ENCODE measurements at regions of chr9 and their contacts with region 1.

Region 1: DNA sequence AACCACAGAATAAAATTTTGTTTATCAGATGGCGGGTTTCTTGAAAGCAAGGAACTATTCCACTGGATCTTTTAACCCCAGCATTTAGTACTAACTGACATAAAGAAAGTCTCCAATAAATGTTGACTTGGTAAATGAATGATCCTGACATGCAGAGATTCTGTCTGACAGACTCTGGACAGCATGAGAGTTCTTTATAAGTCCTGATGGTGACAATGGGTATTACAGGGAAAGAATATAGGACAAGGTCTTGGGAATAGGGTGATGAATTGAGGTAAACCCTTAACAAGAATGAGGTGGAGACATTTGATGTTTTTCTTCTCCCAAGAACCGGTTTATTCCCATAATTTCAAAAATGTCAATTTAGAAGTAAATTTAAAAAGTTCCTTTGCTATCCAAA is 453.9 kb downstream of the TUSC1 start:
- DNase-seq: no peak
- ATAC-seq: no peak
- H3K4me3 Mint-ChIP-seq: no peak overlapping the region
- H3K27ac Mint-ChIP-seq: no peak overlapping the region
- H3K4me1 Mint-ChIP-seq: no peaks in the 10 kb centered on the region
- H3K27me3 Mint-ChIP-seq: no peaks in the 10 kb centered on the region
- CTCF ChIP-seq: no peak

Region 2: DNA sequence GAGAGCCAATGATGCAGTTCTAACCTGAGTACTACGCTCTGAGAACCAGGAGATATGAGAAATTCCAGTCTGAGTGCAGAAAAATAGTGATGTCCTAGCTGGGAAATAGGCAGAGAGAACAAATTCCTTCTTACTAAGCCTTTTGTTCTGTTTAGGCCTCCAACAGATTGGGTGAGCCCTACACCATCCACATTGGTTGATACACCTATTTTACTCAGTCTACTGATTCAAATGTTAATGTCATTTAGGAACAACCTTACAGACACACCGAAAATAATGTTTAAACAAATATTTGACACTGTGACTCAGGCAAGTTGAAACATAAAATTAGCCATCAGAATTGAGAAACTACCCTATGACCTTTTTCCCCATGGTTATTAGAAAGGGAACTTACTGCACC is 344.7 kb before region 1 on chr9:
- CTCF ChIA-PET with region 1: no interaction called
- POLR2A ChIA-PET with region 1: no interaction called
- intact Hi-C with region 1: loop called (anchors 10 kb)
- DNase-seq: no peak
- ATAC-seq: no peak
- H3K4me3 Mint-ChIP-seq: no peak overlapping the region
- H3K27ac Mint-ChIP-seq: no peak overlapping the region
- H3K4me1 Mint-ChIP-seq: no peaks in the 10 kb centered on the region
- H3K27me3 Mint-ChIP-seq: no peaks in the 10 kb centered on the region
- CTCF ChIP-seq: no peak

Region 3: DNA sequence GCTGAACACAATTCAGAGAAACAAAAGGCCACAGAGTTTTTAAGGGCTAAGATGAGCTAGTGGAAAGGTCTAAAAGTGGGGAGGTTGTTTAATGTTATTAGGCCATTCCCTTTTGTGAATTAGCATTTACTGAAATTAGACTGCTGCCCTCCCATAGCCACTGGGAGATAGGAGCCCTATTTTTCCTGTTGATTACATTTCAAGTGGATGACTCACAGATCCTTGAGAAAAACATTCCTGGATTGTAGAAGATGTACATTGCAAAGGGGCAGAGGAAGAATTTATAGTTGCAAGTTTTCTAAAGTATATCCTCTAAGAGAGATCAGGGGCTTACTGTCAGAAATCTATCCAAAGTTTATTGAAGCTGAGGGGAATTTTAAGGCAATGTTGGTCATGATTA is 311.5 kb before region 1 on chr9:
- CTCF ChIA-PET with region 1: no interaction called
- POLR2A ChIA-PET with region 1: no interaction called
- intact Hi-C with region 1: no loop called
- DNase-seq: no peak
- ATAC-seq: no peak
- H3K4me3 Mint-ChIP-seq: no peak overlapping the region
- H3K27ac Mint-ChIP-seq: no peak overlapping the region
- H3K4me1 Mint-ChIP-seq: no peaks in the 10 kb centered on the region
- H3K27me3 Mint-ChIP-seq: no peaks in the 10 kb centered on the region
- CTCF ChIP-seq: no peak

Region 4: DNA sequence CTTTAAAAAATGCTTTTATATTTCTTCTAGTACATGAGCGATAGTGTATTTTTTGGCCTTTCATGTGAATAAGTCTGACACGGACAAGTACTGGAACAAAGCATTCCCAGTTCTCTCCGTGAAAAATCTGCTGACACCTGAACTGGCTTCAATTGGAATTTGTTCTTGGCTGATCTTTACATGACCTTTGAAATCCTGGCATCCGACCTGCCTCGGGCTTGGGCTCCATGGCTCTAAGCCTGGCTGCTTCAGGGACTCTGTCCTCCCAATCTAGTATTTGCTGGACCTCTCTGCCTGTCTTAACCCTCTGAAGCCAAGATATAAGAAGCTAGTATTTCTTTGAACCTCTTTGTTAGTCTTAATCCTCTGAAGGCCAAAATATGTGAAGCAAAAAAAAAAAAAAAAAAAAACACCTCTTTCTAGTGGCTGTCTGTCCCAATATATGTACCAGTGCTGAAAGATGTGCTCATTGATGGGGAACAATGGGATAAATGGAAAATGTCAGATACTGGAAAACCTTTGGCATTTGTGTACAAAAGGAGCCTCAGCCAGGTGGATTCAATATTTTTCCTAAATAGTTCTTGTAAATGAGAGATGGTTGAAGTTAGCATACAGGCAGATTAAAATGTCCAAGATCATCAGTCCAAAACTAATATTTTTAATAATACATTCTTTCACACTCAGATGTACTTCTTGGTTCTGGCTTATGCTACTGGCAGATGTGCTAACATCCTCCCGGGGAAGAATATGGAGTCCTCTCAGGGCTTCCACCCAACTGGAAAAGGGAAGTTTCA is 16.7 kb before region 1 on chr9:
- CTCF ChIA-PET with region 1: no interaction called
- POLR2A ChIA-PET with region 1: no interaction called
- intact Hi-C with region 1: no loop called
- DNase-seq: no peak
- ATAC-seq: no peak
- H3K4me3 Mint-ChIP-seq: no peak overlapping the region
- H3K27ac Mint-ChIP-seq: no peak overlapping the region
- H3K4me1 Mint-ChIP-seq: no peaks in the 10 kb centered on the region
- H3K27me3 Mint-ChIP-seq: no peaks in the 10 kb centered on the region
- CTCF ChIP-seq: no peak

Region 5: GRCh38 chr9:25353783-25354182 is 129.5 kb after region 1 on chr9:
- CTCF ChIA-PET with region 1: no interaction called
- POLR2A ChIA-PET with region 1: no interaction called
- intact Hi-C with region 1: no loop called
- DNase-seq: no peak
- ATAC-seq: no peak
- H3K4me3 Mint-ChIP-seq: no peak overlapping the region
- H3K27ac Mint-ChIP-seq: no peak overlapping the region
- H3K4me1 Mint-ChIP-seq: no peaks in the 10 kb centered on the region
- H3K27me3 Mint-ChIP-seq: no peaks in the 10 kb centered on the region
- CTCF ChIP-seq: no peak

Measured in activated CD8-positive, alpha-beta T cell treated with anti-CD3 and anti-CD28 coated beads for 36 hours (primary cell).